ENCODE measurements at regions of chr3 and their contacts with region 1.

Region 1: GRCh38 chr3:149442851-149443544 is 31.5 kb upstream of the TM4SF4 start:
- DNase-seq: peak; percentile 89
- ATAC-seq: peak; percentile 81
- H3K4me3 ChIP-seq: no peak overlapping the region
- H3K27ac ChIP-seq: peak overlapping the region; percentile 65
- H3K4me1 ChIP-seq: peaks cover 10% of the 10 kb centered on the region
- H3K27me3 ChIP-seq: no peaks in the 10 kb centered on the region
- CTCF ChIP-seq: no peak
- POLR2A ChIP-seq: no peak
- RAD21 ChIP-seq: no peak

Region 2: DNA sequence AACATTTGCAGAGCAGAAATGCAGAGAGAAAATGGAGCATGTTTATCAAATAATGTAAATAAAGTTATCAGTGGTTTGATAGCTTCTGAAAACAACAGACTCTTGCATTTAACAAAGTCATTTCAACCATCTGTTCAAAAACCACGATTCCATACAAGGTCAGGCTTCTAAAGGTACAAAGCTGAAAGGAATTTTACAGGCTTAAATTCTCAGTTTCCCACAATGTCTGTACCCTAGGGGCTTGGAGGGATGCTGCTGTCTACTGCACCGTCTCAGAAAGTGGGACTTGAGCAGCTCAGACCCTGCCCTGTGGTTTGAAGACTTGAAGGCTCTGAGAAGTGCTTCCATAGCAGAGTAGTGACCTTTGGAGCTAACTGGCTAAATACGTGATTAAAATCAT is 35.1 kb before region 1 on chr3:
- CTCF ChIA-PET with region 1: no interaction called
- POLR2A ChIA-PET with region 1: no interaction called
- dilution Hi-C with region 1: no loop called
- in situ Hi-C with region 1: no loop called
- intact Hi-C with region 1: loop called (anchors 5 kb)
- DNase-seq: peak; percentile 65
- ATAC-seq: peak; percentile 82
- H3K4me3 ChIP-seq: no peak overlapping the region
- H3K27ac ChIP-seq: peak overlapping the region; percentile 93
- H3K4me1 ChIP-seq: peaks cover 2% of the 10 kb centered on the region
- H3K27me3 ChIP-seq: no peaks in the 10 kb centered on the region
- CTCF ChIP-seq: no peak
- POLR2A ChIP-seq: no peak
- RAD21 ChIP-seq: no peak

Measured in IMR-90 (cell line).